Ovary (tissue), 10 donors: ENCODE measurements at regions of chr7 and their contacts with region 1.

Region 1: DNA sequence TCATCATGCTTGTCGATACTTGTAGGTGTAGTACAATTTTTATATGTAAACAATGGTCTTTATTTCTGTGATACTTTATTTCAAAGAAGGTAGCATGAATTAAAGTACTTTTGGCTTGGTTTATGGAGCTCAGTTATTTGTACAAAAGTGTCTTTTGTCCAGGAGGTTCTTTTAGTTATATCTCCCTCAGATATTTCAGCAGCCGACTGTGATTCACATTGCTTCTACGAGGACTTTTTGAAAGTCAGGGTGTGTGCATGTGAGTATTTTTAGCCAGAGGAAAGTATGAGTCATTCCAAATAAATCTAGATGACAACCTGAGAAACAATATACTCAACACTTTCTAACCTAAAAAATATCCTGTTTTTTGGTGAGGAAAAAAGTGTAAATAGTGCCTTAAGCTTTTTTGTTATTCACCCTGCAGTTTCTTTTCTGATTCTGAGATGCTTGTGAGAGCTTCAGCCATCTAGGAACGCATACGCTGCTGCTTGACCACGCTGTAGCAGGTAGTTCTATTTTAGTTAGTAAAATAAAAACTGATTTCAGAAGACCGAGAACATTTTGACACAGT is 595 bp upstream of the SUN1 start:
- DNase-seq: peak in 1 of 5 donors; percentile 58
- H3K4me3 ChIP-seq: peak overlapping the region; percentile 19
- H3K27ac ChIP-seq: peak overlapping the region; percentile 77 to 89
- H3K4me1 ChIP-seq: peaks cover 29% of the 10 kb centered on the region
- H3K27me3 ChIP-seq: no peaks in the 10 kb centered on the region
- CTCF ChIP-seq: no peak
- EP300 ChIP-seq: peak; percentile 17
- POLR2A ChIP-seq: peak; percentile 37

Region 2: DNA sequence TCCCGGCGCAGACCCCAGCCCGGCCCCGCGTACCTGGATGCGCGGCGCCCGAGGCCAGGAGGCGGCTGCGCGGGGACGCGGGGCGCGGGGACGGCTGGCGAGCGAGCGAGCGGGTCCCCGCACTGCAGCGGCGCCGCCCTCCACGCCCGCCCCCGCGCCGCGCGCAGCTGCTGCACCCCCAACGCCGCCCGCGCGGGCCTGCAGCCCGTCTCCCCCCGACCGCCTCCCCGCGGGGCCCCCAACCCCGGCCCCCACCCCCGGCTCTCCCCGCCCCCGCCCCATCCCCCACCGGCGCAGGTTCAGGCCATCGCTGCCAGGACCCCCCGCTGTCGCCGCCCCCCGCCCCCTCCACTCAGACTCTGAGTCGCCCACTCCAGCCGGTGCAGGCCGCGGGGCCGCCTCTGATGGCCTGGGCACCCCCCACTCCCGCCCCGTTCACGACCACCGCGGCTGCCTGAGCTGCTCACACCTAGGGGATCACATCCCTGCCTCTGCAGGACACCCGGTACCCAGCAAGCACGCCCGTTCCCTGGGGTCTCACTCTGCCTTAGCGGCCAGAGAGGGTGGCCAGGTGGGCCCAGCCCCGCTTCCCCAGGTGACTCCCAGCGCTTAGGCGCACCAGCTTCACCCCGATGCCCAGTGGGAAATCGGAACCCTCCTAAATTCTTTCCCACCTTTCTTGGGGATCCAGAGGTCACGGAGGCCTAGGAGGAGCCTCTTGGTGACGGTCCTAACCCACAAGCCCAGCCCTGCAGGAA is 119.1 kb before region 1 on chr7:
- intact Hi-C with region 1: no loop called
- DNase-seq: peak in 4 of 5 donors; percentile 22 to 60 (median 39)
- H3K4me3 ChIP-seq: peak overlapping the region; percentile 52
- H3K27ac ChIP-seq: peak overlapping the region in 1 of 2 donors; percentile 75
- H3K4me1 ChIP-seq: peaks cover 5% of the 10 kb centered on the region
- H3K27me3 ChIP-seq: no peaks in the 10 kb centered on the region
- CTCF ChIP-seq: no peak
- EP300 ChIP-seq: no peak
- POLR2A ChIP-seq: no peak

Region 3: GRCh38 chr7:768881-769504 is 62.7 kb before region 1 on chr7:
- intact Hi-C with region 1: no loop called
- DNase-seq: peak; percentile 82 to 90 (median 87)
- H3K4me3 ChIP-seq: peak overlapping the region; percentile 11
- H3K27ac ChIP-seq: peak overlapping the region in 1 of 2 donors; percentile 87
- H3K4me1 ChIP-seq: peaks cover 24% of the 10 kb centered on the region
- H3K27me3 ChIP-seq: no peaks in the 10 kb centered on the region
- CTCF ChIP-seq: peak in 1 of 3 donors; percentile 6
- EP300 ChIP-seq: no peak
- POLR2A ChIP-seq: peak; percentile 5

Region 4: GRCh38 chr7:794671-795329 is 36.9 kb before region 1 on chr7:
- intact Hi-C with region 1: loop called in 2 of 4 experiments (anchors 5 to 10 kb)
- DNase-seq: peak in 2 of 5 donors; percentile 27 to 33
- H3K4me3 ChIP-seq: no peak overlapping the region
- H3K27ac ChIP-seq: no peak overlapping the region
- H3K4me1 ChIP-seq: peaks cover 2% of the 10 kb centered on the region
- H3K27me3 ChIP-seq: no peaks in the 10 kb centered on the region
- CTCF ChIP-seq: no peak
- EP300 ChIP-seq: no peak
- POLR2A ChIP-seq: no peak

Region 5: DNA sequence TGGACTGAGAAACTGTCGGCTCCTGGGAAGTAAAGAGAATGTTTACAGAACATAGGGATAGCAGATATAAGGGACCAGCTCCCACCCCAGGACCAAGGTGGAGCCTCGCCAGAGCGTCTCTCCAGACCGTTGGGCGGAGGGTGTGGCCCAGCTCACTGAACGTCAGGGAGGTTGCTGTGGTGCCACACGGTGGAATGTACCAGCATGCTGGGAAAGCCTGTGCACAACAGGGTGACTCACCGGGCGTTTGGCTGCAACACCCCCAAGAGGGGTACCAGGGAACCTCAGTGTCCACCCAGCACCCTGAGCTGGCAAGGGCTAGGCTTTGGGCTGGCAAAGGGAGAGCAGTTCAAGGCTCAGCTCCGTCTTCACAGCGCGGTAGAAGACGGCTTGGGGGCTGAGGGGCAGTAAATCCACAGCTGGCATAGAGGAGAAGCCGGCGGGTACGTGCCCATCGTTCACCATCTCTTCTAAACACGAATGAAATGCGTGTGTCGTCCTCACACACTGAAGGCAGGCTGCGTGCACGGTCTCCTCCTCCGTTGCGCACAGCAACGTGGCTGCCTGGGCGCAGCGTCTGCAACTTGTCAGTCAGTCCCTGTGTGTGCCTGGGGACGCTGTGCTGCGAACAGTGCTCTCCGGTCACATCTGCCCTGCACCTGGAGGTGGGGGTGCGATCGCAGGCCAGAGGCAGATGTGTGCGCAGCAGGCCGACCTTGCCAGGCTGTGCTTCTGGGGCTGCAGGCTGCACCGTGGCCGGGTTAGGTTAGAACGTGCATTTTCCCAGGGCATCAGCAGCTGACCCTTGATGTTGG is 36.2 kb after region 1 on chr7:
- intact Hi-C with region 1: loop called in 2 of 4 experiments (anchors 5 kb)
- DNase-seq: peak; percentile 36 to 70 (median 60)
- H3K4me3 ChIP-seq: no peak overlapping the region
- H3K27ac ChIP-seq: peak overlapping the region; percentile 81 to 85
- H3K4me1 ChIP-seq: peaks cover 19% of the 10 kb centered on the region
- H3K27me3 ChIP-seq: no peaks in the 10 kb centered on the region
- CTCF ChIP-seq: no peak
- EP300 ChIP-seq: no peak
- POLR2A ChIP-seq: no peak